Panc1 (cell line): ENCODE measurements at regions of chr15 and their contacts with region 1.

Region 1: DNA sequence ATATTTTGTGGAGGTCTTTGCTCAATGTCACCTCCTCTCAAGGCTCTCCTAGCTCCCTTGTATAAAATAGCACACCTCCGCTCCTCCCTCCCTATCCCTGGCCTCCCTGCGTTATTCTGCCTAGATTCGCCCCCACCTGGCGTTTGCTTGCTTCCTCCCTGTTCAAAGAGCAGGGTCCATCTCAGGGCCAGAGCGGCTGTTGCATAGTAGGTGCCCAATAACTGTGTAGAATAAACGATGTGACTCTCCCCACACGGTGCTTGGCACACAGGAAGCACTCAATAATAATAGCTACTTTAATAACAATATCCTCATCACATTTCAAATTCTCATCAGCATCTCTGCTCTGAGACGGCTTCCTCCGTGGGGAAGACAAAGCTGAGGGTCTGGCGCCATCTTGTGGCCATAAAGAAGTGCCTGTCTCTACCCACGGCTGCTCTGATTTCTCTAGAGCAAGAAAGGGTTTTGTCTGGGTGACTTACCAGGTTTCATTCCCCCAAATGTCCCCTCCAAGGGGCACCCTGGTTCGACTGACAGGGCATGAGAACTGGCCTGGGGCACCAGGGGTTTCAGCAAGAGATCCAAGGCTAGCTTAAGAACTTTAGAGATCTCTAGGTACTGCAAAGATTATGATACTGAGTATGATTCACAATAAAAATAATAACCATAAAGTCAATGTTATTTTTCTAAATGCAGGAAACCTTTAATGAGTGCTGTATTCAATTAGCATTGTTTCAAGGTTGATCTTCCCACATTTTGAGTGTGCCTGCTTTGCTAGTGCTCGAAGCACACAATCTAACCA is 16.1 kb downstream of the CD276 start:
- DNase-seq: peak; percentile 56
- ATAC-seq: peak; percentile 85
- H3K4me3 ChIP-seq: no peak overlapping the region
- H3K27ac ChIP-seq: no peak overlapping the region
- H3K4me1 ChIP-seq: peaks cover 10% of the 10 kb centered on the region
- H3K27me3 ChIP-seq: no peaks in the 10 kb centered on the region
- CTCF ChIP-seq: peak; percentile 92

Region 2: DNA sequence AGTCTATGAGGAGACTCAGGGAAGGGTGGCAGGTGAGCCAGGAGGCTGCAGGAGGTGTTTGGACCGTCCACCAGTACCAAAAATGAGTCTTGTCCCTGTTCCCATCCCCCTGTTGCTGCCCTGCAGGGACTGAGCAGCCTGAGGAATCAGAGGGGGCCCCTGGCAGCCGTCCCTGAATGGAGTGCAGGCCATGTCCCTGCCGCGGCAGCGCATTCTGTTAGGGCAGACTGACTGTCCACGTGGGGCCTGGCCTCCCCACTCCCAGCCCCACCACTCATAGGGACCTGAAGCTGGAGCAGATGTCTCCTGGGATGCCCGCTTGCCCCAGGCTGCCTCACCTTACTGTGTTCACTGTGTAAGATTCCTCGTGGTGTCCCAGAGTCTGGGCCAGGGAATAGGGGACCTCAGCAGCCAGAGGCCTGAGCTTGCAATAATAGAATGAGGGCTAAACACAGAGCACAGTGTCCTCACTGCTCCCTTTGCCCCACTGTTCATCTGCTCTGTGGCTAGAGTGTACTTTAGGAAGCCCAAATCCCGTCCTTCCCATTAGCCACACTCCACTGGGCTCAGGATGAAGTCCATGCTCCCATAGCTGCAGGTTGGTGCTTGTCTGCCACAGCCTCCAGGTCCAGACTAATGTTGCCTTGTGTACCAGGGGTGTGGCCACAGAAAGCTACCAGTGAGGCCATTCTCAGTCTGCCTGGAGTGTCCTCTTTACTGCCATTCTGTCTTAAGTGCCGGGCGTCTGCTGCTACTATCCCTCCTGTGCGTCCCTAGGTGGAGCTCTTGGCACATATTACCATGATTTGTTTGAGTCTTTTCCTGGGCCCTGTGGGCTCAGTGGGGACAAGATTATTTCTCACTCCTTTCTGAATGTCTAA is 394.7 kb before region 1 on chr15:
- CTCF ChIA-PET with region 1: no interaction called
- POLR2A ChIA-PET with region 1: no interaction called
- in situ Hi-C with region 1: no loop called
- intact Hi-C with region 1: loop called (anchors 10 kb)
- DNase-seq: peak; percentile 41
- ATAC-seq: peak; percentile 94
- H3K4me3 ChIP-seq: no peak overlapping the region
- H3K27ac ChIP-seq: no peak overlapping the region
- H3K4me1 ChIP-seq: no peaks in the 10 kb centered on the region
- H3K27me3 ChIP-seq: no peaks in the 10 kb centered on the region
- CTCF ChIP-seq: peak; percentile 85

Region 3: GRCh38 chr15:73560501-73561117 is 139.6 kb before region 1 on chr15:
- CTCF ChIA-PET with region 1: interaction called, 5 read pairs
- POLR2A ChIA-PET with region 1: no interaction called
- in situ Hi-C with region 1: no loop called
- intact Hi-C with region 1: loop called (anchors 2 kb)
- DNase-seq: peak; percentile 46
- ATAC-seq: peak; percentile 85
- H3K4me3 ChIP-seq: no peak overlapping the region
- H3K27ac ChIP-seq: no peak overlapping the region
- H3K4me1 ChIP-seq: no peaks in the 10 kb centered on the region
- H3K27me3 ChIP-seq: no peaks in the 10 kb centered on the region
- CTCF ChIP-seq: peak; percentile 49; the same call in 1 of the 2 replicates

Region 4: DNA sequence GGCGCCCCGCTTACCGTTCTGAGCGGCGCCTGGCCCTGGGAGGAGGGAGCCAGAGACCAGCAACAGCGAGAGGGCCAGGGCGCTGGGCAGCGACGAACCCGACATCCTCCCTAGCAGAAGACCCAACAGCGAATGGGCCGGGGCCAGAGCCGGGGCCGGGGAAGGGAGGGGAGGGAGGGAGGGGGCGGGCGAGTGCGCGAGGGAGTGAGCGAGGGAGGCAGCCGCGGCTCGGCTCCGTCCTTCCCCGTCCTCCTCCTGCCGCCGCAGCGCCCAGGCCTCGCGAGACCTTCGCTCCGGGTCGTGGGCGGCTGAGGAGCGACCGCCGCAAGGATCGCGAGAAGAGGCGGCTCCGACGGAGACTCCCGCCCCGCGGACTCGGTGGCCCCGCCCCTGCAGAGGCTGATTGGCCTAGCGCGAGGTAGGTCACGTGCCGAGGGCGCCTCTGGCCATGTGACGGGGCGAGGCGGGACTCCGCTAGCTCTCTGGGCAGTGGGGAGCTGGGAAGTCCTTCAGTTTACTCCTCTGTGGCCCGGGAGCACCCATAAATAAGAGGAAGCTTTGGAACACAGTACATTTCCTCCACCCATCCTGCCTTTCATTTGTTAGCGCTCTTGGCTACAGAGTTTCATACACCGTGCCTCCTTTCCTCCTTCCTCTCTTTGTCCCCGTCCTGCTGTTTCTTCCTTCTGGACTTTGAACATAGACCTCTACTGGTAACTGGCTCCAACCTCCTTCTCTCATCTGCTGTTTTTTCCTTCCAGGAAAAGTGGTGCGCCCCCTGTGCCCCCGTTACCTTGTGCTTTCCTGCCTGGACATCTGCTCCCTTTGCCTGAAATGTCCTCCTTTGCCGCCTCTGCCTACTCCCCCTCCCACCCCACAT is 66.9 kb before region 1 on chr15 and contains the start of gene NPTN:
- CTCF ChIA-PET with region 1: interaction called, 34 read pairs
- POLR2A ChIA-PET with region 1: no interaction called
- in situ Hi-C with region 1: no loop called
- intact Hi-C with region 1: loop called (anchors 2 kb)
- DNase-seq: peak; percentile 76
- ATAC-seq: peak; percentile 97
- H3K4me3 ChIP-seq: peak within 1 kb of the TSS; percentile 86 to 88
- H3K27ac ChIP-seq: peak within 1 kb of the TSS; percentile 95
- H3K4me1 ChIP-seq: peaks cover 36% of the 10 kb centered on the region
- H3K27me3 ChIP-seq: peaks cover 2% of the 10 kb centered on the region; the same call in 1 of the 2 replicates
- CTCF ChIP-seq: no peak
- total RNA-seq, gene NPTN: 151 TPM

Region 5: DNA sequence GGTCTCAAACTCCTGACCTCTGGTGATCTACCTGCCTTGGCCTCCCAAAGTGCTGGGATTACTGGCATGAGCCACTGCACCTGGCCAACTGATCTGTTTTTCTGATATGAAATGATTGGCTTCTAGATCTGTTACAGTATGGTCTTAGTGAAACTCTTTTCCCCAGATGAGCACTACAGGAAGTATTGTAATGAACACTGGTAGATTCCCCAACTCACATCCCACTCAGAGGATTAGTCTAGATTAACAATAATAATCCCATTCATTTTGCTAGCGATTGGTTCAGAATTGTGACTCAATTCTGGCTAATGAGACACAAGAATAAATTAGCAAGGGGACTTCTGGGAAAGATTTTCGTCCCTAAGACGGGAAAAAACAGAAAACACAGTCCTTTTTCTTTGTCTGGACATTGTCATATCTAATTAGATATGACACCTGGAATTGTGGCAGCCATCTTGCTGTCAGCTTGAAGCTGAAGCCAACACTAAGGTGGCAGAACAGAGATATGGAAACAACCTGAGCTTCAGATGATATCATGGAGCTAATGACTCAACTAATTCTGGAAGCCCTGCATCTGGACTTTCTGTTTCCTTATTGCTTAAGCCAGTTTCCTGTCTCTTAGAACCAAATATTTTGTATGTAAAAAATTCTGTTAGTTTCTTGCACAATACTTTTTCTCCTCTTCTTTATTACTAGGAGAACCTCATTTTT is 49.7 kb before region 1 on chr15:
- CTCF ChIA-PET with region 1: no interaction called
- POLR2A ChIA-PET with region 1: interaction called, 12 read pairs
- in situ Hi-C with region 1: no loop called
- intact Hi-C with region 1: no loop called
- DNase-seq: no peak
- ATAC-seq: no peak
- H3K4me3 ChIP-seq: no peak overlapping the region
- H3K27ac ChIP-seq: no peak overlapping the region
- H3K4me1 ChIP-seq: no peaks in the 10 kb centered on the region
- H3K27me3 ChIP-seq: no peaks in the 10 kb centered on the region; the same call in 1 of the 2 replicates
- CTCF ChIP-seq: no peak

Region 6: GRCh38 chr15:73677146-73677607 is 23.1 kb before region 1 on chr15:
- CTCF ChIA-PET with region 1: interaction called, 12 read pairs
- POLR2A ChIA-PET with region 1: interaction called, 4 read pairs
- in situ Hi-C with region 1: no loop called
- intact Hi-C with region 1: loop called (anchors 1 kb)
- DNase-seq: peak; percentile 46
- ATAC-seq: peak; percentile 88
- H3K4me3 ChIP-seq: no peak overlapping the region
- H3K27ac ChIP-seq: no peak overlapping the region
- H3K4me1 ChIP-seq: no peaks in the 10 kb centered on the region
- H3K27me3 ChIP-seq: peaks cover 13% of the 10 kb centered on the region
- CTCF ChIP-seq: peak; percentile 85